ENCODE measurements at regions of chr19 and their contacts with region 1.

Region 1: GRCh38 chr19:55516878-55517620 is 19.9 kb downstream of the SBK2 start:
- DNase-seq: peak; percentile 90 to 97 (median 94)
- H3K4me3 ChIP-seq: peak overlapping the region; percentile 41 to 79 (median 61)
- H3K27ac ChIP-seq: peak overlapping the region in 48 of 59 donors; percentile 31 to 91 (median 73)
- H3K27me3 ChIP-seq: no peaks in the 10 kb centered on the region
- CTCF ChIP-seq: peak; percentile 29 to 90 (median 78)

Region 2: DNA sequence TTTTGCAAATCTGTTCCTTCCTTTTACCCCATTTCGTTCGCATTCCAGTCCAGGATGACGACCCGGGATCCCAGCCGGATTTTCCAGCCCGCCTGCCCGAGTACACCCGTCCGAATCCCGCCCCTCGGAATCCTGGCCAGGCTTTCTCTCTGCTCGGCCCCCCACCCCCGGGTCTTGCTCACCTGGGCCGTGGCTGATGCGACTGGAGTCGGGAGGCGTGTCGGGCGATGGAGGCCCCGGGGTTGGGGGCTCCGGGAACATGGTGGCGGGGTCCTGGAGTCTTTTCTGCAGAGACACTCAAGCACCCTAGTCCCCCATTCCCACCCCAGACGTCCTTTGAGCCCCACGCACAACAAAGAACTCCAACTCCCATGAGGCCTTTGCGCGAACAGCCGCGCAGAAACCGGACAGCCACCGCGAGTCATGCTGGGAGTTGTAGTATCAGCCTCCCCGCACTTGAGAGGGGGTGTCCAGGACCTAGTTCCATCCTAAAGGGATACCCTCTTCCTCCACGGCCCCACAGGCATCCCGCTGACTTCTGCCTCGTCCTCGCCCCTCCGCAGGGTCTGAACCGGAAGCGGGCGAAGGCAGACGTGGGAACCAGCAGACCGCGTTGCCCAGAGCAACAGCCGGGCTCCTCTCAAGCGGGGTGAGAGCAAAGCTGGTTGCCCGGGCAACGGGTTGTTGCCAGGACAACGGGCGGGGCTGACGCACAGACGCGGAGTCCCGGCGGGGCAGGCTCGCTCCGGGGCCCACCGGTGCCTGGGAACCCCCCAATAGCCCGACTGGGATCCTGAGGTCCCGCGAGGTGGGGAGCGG is 338.1 kb before region 1 on chr19:
- intact Hi-C with region 1: no loop called
- DNase-seq: peak; percentile 79 to 95 (median 90)
- H3K4me3 ChIP-seq: peak overlapping the region; percentile 49 to 81 (median 68)
- H3K27ac ChIP-seq: peak overlapping the region in 51 of 59 donors; percentile 0 to 90 (median 66)
- H3K27me3 ChIP-seq: peaks cover 0 to 60% (median 23%) of the 10 kb centered on the region in 45 donors
- CTCF ChIP-seq: no peak

Region 3: DNA sequence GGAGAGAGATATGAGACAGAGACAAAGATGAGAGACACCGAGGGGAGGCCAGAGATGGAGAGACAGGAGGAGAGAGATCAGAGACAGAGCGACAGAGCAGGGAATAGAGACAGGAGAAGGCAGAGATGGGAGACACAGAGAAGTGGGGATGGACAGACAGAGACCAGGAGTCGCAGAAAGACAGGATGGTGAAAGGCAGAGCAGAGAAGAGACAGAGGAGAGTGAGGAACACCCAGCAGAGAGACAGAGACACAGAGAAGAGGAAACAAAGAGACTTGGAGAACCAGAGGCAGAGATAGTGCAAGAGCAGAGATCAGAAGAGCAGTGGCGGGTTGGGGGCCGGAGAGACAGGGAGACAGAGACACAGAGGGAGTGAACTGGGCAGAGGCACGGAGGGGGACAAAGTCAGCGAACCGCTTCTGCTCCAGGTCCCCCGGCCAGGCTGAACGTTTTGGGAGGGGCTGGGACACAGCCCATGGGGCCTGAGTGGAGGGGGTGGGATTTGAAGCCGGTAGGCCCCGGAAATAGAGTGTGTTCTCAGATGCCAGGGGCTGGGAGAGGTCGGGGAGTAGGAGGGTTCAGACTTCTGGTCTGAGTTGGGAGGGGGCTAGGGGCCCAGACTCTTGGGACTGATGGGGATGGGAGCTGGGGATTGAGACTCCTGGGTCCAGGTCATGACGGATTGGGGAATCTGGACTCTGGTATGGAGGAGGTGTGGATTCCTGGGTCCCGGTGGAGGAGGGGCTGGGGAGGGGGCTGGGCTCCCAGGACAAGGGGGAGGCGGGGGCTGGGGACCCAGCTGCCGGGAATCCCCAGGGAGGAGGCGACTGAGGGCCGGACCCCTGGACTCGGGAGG is 62.9 kb after region 1 on chr19:
- intact Hi-C with region 1: loop called in 1 of 2 experiments (anchors 5 kb)
- DNase-seq: peak in 1 of 10 donors; percentile 11
- H3K4me3 ChIP-seq: peak overlapping the region; percentile 50 to 98 (median 88)
- H3K27ac ChIP-seq: peak overlapping the region; percentile 70 to 99 (median 95)
- H3K27me3 ChIP-seq: no peaks in the 10 kb centered on the region
- CTCF ChIP-seq: no peak

Region 4: GRCh38 chr19:55599468-55600279 is 82.6 kb after region 1 on chr19 and contains the start of gene FIZ1:
- intact Hi-C with region 1: loop called (anchors 2 kb)
- DNase-seq: peak; percentile 97 to 99 (median 98)
- H3K4me3 ChIP-seq: peak within 1 kb of the TSS; percentile 64 to 99 (median 90)
- H3K27ac ChIP-seq: peak within 1 kb of the TSS; percentile 93 to 100 (median 99)
- H3K27me3 ChIP-seq: no peaks in the 10 kb centered on the region
- CTCF ChIP-seq: peak in 8 of 56 donors; percentile 3 to 36 (median 6)
- total RNA-seq, gene FIZ1: 18.3 to 50.0 (median 30.3) TPM

Region 5: DNA sequence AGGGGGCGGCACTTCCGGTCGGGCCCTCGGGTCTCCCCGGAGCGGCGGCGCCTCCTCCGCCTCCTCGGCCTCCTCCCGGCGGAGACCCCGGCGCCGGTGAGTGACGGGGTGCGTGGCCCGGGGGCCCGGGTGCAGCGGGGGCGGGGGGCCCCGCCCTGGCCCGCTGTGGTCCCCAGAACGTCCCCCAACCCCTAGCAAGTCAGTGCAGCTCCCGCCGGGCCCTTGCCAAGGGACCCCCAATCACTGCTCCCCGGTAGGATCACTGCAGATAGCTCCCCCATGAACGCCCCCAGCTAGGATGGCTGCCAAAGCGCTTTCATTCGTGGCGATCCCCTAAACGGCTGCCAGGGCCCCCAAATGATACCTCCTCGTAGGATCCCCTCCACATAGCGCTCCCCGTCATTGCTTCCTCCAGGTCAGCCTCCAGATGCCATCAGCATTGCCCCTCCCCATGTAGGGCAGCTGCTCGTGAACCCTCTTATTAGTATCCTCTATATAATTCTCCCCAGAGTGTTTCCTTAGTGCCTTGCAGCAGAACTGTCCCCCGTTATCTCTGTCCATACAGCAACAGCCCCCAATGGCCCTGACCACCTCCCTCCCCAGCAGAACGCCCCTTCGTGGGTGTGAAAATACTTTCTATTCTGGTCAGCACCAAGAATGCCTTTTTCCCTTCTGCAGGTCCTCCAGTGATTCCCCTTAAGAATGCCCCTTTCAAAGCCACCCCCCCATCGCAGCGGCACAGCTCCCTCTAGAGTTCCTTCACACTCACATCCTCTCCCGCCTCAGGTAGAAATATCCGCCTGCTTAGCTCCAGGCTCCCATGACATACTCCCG is 88.8 kb after region 1 on chr19 and contains the start of gene ZNF865:
- intact Hi-C with region 1: loop called in 1 of 2 experiments (anchors 2 kb)
- DNase-seq: peak in 9 of 10 donors; percentile 55 to 83 (median 70)
- H3K4me3 ChIP-seq: peak within 1 kb of the TSS; percentile 60 to 90 (median 80)
- H3K27ac ChIP-seq: peak within 1 kb of the TSS; percentile 76 to 99 (median 95)
- H3K27me3 ChIP-seq: no peaks in the 10 kb centered on the region
- CTCF ChIP-seq: peak in 55 of 56 donors; percentile 29 to 72 (median 57)
- total RNA-seq, gene ZNF865: 14.1 to 30.5 (median 19.4) TPM

Region 6: DNA sequence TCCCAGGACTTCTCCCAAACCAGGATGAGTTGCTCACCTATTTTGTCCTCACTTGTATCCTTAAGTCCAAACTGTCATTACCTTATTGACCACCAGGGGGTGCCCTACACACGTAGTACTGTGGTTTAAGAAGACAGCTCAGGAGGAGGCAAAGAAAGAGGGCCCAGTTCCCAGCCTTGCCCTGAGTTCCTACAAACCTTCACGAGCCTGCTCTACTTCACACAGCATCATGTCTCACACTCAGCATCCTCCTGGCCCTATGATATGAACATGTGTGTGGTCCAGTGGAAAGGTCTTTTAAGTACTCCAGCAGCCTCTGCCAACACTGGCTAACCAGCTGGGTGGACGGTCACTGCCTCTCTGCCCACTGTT is 115.4 kb after region 1 on chr19:
- intact Hi-C with region 1: loop called in 1 of 2 experiments (anchors 5 kb)
- DNase-seq: peak in 8 of 10 donors; percentile 58 to 98 (median 82)
- H3K4me3 ChIP-seq: peak overlapping the region in 1 of 59 donors; percentile 26
- H3K27ac ChIP-seq: peak overlapping the region in 42 of 59 donors; percentile 2 to 80 (median 54)
- H3K27me3 ChIP-seq: no peaks in the 10 kb centered on the region
- CTCF ChIP-seq: peak; percentile 81 to 98 (median 89)